ENCODE measurements at regions of chr9 and their contacts with region 1.

Region 1: DNA sequence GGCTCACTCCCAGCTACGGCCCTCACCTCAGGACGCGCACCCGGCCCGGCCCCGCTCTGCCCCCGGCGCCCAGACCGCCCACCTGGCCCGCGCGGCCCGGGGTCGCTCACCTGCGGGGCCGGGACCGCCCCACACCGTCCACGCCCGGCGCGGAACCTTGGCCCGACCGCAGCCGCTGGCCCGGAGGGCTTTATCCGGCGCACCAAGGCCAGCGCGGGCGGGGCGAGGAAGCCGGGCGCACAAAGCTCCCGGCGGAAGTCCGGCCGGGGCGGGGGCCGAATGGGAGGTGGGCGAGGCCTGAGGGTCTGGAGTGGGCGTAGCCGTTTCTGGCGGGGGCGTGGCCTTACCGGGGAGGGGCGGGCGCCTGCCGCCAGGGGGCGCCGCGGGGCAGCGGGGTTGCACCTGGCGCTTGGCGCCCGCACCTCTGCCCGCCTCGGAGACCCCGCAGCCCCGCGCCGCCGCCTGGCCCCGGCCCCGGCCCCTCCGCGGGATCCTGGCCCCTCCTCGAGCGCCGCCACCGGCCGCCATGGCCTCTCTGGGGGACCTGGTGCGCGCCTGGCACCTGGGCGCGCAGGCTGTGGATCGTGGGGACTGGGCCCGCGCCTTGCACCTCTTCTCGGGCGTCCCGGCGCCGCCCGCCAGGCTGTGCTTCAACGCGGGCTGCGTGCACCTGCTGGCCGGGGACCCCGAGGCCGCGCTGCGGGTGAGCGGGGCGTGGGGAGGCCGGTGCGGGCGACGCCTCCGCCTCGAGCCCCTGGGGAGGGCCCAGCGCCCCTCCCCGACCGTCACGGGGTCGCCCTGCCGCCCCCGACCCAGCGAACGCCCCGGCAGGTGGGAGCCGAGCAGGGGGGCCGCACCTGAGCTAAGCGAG is at the starts of genes EXD3 and NOXA1:
- DNase-seq: peak; percentile 97
- ATAC-seq: peak; percentile 95
- H3K4me3 Mint-ChIP-seq: peak within 1 kb of the TSS; percentile 81
- H3K27ac Mint-ChIP-seq: peak within 1 kb of the TSS; percentile 24
- H3K4me1 Mint-ChIP-seq: peaks cover 13% of the 10 kb centered on the region
- H3K27me3 Mint-ChIP-seq: no peaks in the 10 kb centered on the region
- CTCF ChIP-seq: no peak
- total RNA-seq, gene EXD3: 8.4 and 12.8 TPM in 2 replicates
- total RNA-seq, gene NOXA1: 2.6 and 3.9 TPM in 2 replicates

Region 2: DNA sequence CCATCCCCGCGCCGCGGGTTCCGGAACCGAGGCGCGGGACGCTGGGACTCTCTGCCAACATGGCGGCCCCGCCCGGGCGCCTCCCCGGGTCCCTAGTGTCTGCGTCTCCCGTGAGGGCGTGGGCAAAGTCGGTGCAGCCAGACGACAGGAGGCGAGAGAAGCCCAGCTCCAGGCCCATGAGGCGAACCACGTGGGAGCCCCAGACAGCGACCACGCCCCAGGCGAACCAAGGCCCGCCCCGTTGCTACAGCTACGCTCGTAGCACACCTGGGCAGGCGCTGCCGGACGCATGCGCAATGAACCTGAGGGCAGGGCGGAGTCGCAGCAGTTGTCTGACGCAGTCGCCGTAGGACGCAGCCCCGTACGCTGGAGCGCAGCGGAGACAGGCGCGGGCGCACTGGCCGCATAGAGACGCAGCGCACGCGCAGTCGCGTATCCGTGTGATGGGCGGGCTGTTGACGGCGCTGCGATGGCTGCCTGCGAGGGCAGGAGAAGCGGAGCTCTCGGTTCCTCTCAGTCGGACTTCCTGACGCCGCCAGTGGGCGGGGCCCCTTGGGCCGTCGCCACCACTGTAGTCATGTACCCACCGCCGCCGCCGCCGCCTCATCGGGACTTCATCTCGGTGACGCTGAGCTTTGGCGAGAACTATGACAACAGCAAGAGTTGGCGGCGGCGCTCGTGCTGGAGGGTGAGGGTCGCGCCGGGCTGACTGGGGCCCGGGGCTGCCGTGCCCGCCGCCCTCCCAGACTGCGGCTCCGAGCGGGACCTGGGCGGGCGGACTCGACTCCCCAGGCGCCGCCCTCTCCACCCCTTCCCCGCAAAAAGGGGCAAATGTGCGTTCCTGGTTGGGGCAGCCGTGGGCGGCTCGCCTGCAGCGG is 336.5 kb before region 1 on chr9 and contains the start of gene MAN1B1:
- CTCF ChIA-PET with region 1: no interaction called
- POLR2A ChIA-PET with region 1: interaction called, 3 read pairs
- intact Hi-C with region 1: loop called (anchors 2 kb)
- DNase-seq: peak; percentile 98
- ATAC-seq: peak; percentile 77
- H3K4me3 Mint-ChIP-seq: peak within 1 kb of the TSS; percentile 93
- H3K27ac Mint-ChIP-seq: peak within 1 kb of the TSS; percentile 97
- H3K4me1 Mint-ChIP-seq: peaks cover 49% of the 10 kb centered on the region
- H3K27me3 Mint-ChIP-seq: no peaks in the 10 kb centered on the region
- CTCF ChIP-seq: no peak
- total RNA-seq, gene MAN1B1: 33.6 and 37.7 TPM in 2 replicates

Region 3: GRCh38 chr9:137353223-137354152 is 69.8 kb before region 1 on chr9:
- CTCF ChIA-PET with region 1: no interaction called
- POLR2A ChIA-PET with region 1: no interaction called
- intact Hi-C with region 1: no loop called
- DNase-seq: no peak
- ATAC-seq: no peak
- H3K4me3 Mint-ChIP-seq: no peak overlapping the region
- H3K27ac Mint-ChIP-seq: no peak overlapping the region
- H3K4me1 Mint-ChIP-seq: no peaks in the 10 kb centered on the region
- H3K27me3 Mint-ChIP-seq: no peaks in the 10 kb centered on the region
- CTCF ChIP-seq: no peak

Region 4: DNA sequence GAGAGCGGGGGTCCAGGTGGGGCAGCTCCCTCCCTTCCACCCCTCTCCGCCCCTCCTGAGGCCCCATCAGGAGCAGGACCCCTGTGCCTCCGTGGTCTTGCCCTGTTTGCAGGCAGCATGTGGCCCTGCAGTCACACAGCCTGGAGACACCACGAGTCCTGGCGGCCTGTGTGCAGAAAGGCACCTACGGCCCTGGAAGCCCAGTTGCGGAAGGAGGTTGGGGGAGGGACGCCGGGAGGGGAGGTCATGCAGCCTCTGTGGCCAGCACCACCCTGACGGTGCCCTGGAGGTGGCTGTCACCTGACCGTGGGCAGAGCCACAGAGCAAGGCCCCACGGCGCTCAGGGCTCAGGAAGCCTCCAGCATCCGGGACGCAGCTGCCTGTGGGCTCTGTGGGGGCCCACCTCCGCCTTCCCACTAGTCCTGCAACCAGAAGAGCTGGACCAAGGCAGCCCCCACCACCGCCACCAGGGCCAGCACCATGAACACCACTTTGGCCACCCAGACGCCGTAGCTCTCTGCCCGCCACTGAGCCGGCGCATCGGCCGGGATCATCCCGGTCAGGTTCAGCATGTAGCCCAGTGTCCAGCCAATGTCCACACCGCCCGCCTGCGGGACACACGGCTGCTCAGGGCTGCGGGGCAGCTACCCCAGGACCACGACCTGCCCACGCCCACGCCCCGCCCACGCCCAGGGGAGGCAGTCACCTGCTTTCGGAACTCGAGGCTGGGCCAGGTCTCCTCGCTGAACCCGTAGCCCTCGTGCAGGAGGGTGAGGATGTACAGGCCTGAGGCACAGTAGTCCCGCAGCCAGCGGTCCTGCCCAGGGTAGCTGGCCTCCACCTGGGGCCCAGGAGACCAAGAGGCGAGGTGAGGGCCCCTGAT is 11.5 kb after region 1 on chr9:
- CTCF ChIA-PET with region 1: no interaction called
- POLR2A ChIA-PET with region 1: no interaction called
- intact Hi-C with region 1: no loop called
- DNase-seq: no peak
- ATAC-seq: no peak
- H3K4me3 Mint-ChIP-seq: no peak overlapping the region
- H3K27ac Mint-ChIP-seq: no peak overlapping the region
- H3K4me1 Mint-ChIP-seq: peaks cover 5% of the 10 kb centered on the region
- H3K27me3 Mint-ChIP-seq: peaks cover 4% of the 10 kb centered on the region
- CTCF ChIP-seq: no peak

Region 5: DNA sequence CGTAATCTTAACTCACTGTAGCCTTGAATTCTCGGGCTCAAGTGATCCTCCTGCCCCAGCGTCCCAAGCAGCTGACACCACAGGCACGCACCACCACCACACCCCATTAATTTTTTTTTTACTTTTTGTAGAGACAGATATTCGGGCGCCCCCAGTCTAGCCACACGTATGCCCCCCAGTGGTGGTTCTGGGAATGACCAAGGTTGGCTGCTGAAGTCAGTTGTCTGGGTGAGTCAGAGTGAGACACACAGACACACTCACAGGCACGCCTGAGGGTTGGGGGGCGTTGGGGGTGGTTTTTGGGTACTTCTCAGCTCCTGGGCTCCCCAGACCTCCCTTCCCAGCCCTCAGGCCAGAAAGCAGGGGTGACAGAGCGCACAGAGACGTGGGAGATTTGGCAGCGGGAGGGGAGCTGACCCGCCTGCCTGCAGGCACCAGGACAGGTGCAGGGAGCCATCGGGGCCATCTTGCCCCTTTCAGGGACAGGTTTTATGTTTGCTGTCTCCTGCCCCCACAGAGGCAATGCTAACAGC is 22.1 kb after region 1 on chr9:
- CTCF ChIA-PET with region 1: interaction called, 8 read pairs
- POLR2A ChIA-PET with region 1: interaction called, 6 read pairs
- intact Hi-C with region 1: loop called (anchors 1 kb)
- DNase-seq: peak; percentile 73
- ATAC-seq: peak; percentile 94
- H3K4me3 Mint-ChIP-seq: peak overlapping the region; percentile 24
- H3K27ac Mint-ChIP-seq: no peak overlapping the region
- H3K4me1 Mint-ChIP-seq: peaks cover 8% of the 10 kb centered on the region
- H3K27me3 Mint-ChIP-seq: peaks cover 9% of the 10 kb centered on the region
- CTCF ChIP-seq: peak; percentile 89

Region 6: GRCh38 chr9:137459147-137459600 is 35.9 kb after region 1 on chr9 and contains the start of gene NSMF:
- CTCF ChIA-PET with region 1: no interaction called
- POLR2A ChIA-PET with region 1: interaction called, 11 read pairs
- intact Hi-C with region 1: loop called (anchors 1 kb)
- DNase-seq: peak; percentile 98
- ATAC-seq: peak; percentile 76
- H3K4me3 Mint-ChIP-seq: peak within 1 kb of the TSS; percentile 73
- H3K27ac Mint-ChIP-seq: peak within 1 kb of the TSS; percentile 46
- H3K4me1 Mint-ChIP-seq: peaks cover 25% of the 10 kb centered on the region
- H3K27me3 Mint-ChIP-seq: no peaks in the 10 kb centered on the region
- CTCF ChIP-seq: no peak
- total RNA-seq, gene NSMF: 22.5 and 24.7 TPM in 2 replicates

Region 7: DNA sequence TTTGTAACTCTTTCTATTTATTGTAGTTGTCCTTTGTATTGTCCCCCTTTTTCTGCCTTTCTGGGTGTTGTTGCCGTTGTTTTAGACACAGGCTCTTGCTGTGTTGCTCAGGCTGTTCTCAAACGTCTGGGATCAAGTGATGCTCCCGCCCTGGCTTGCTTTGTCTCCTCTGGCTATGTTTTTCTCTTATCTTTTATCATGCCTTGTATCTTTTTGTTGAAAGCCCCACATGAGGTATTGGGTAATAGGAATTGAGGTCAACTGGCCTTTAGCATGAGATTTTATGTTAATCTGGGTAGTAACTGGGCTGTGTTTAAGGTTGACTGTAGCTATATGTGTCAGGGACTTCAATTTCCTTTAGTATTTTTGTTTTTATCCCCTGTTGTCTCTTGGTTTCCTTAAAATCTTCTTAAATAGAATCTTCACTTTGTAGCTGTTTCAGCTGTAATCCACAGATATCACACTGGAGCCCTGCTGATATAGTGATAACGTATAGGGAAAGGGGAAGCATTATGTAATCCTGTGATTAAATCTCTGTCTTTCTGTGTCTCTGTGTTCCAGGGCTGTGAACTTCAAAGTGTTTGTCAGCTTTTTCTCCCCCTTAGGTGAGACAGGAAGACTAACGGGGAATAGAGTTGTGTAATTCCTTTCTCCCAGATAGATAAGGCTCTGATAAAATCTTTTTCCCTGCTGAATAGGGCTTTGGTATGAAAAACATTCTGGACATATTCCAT is 428.4 kb after region 1 on chr9:
- CTCF ChIA-PET with region 1: no interaction called
- POLR2A ChIA-PET with region 1: no interaction called
- intact Hi-C with region 1: no loop called
- DNase-seq: no peak
- ATAC-seq: no peak
- H3K4me3 Mint-ChIP-seq: no peak overlapping the region
- H3K27ac Mint-ChIP-seq: no peak overlapping the region
- H3K4me1 Mint-ChIP-seq: no peaks in the 10 kb centered on the region
- H3K27me3 Mint-ChIP-seq: peaks cover 1% of the 10 kb centered on the region
- CTCF ChIP-seq: no peak

Measured in activated B cell treated with CpG ODN at 0.5 μM for 24 hours (primary cell).